Mammary epithelial cell (primary cell): ENCODE measurements at regions of chr1 and their contacts with region 1.

Region 1: GRCh38 chr1:208593306-208594006 is 349.3 kb upstream of the PLXNA2 start:
- DNase-seq: no peak
- H3K4me3 ChIP-seq: no peak overlapping the region
- H3K27ac ChIP-seq: no peak overlapping the region
- H3K4me1 ChIP-seq: no peaks in the 10 kb centered on the region
- H3K27me3 ChIP-seq: peaks cover 4% of the 10 kb centered on the region
- CTCF ChIP-seq: no peak

Region 2: DNA sequence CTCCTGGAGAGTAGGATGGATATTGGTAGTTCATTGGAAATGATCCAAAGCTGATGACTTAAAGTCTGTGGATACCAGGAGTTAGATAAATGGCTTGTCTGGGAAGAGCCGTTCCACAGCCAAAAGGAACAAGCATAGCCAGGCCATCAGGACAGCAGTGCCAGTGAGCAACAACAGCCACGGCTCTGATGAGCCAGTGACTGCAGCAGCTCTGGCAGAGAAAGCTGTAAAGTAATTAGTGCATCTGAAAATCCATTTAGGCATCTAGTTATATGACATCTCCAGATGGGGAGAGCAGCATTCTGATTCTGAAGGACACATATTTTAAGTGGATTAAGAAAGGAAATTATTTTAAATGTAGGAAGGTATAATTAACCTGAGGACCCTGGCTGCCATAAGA is 93.1 kb before region 1 on chr1:
- CTCF ChIA-PET with region 1: no interaction called
- dilution Hi-C with region 1: loop called (anchors 5 kb)
- in situ Hi-C with region 1: no loop called
- intact Hi-C with region 1: no loop called
- DNase-seq: no peak
- H3K4me3 ChIP-seq: no peak overlapping the region
- H3K27ac ChIP-seq: no peak overlapping the region
- H3K4me1 ChIP-seq: peaks cover 22% of the 10 kb centered on the region
- H3K27me3 ChIP-seq: no peaks in the 10 kb centered on the region
- CTCF ChIP-seq: no peak

Region 3: GRCh38 chr1:208668991-208669390 is 75.5 kb after region 1 on chr1:
- CTCF ChIA-PET with region 1: no interaction called
- dilution Hi-C with region 1: no loop called
- in situ Hi-C with region 1: no loop called
- intact Hi-C with region 1: no loop called
- DNase-seq: peak; percentile 16
- H3K4me3 ChIP-seq: no peak overlapping the region
- H3K27ac ChIP-seq: no peak overlapping the region
- H3K4me1 ChIP-seq: no peaks in the 10 kb centered on the region
- H3K27me3 ChIP-seq: no peaks in the 10 kb centered on the region
- CTCF ChIP-seq: no peak

Region 4: DNA sequence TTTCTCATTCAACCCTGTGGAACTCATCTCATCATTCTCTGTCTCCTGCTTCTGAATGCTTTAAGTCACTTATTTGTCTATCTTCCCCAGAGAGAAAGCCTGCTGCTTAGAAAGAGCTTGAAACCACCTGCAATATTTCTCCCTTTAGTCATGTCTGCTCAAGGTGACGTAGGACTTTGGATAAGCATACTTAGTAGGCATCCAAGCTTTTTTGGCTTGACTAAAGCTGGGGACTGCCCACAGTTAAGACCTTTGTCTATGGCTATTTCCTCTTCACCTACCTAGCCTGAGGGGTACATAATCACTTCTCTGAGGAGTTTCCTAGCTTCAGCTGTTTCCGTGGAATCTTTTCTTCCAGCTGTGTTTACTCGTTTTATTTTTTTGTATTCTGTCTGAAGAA is 324.3 kb after region 1 on chr1:
- CTCF ChIA-PET with region 1: no interaction called
- dilution Hi-C with region 1: no loop called
- in situ Hi-C with region 1: no loop called
- intact Hi-C with region 1: no loop called
- DNase-seq: peak; percentile 78
- H3K4me3 ChIP-seq: no peak overlapping the region
- H3K27ac ChIP-seq: peak overlapping the region; percentile 47
- H3K4me1 ChIP-seq: peaks cover 32% of the 10 kb centered on the region
- H3K27me3 ChIP-seq: no peaks in the 10 kb centered on the region
- CTCF ChIP-seq: no peak